H1 (cell line): ENCODE measurements at regions of chr2 and their contacts with region 1.

Region 1: DNA sequence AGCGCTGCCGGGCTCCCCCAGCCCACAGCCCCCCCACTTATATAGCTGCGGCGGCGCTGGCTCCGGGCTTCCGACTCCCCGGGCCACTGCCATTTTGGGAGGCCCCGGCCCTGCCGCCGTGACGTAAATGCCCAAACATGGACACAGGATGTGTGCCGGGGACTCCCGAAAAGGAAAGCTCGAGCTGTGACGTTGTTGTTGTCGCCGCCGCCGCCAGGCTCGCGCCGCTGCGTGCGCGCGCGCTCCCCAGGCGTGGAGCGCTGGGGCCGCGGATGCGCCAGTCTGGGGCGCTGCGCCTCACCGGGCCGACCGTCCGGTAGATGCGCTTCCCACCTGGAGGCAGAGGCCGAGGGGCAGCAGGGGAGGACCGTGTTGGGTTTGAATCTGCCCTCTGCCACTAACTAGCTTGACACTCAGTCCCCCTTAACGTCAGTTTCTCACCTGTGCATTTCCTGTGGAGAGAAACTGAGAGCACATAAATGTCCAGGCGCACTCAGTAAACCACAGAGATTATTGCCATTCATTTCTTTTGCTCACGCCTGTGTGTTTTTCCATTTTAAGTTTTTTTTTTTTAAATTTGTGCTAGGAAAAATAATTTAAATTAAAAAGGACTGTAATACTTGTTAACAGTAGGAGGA is at the start of gene EGR4:
- DNase-seq: peak; percentile 59 to 89
- H3K4me3 ChIP-seq: peak within 1 kb of the TSS; percentile 44 to 68 (median 52)
- H3K27ac ChIP-seq: no peak within 1 kb of the TSS
- H3K4me1 ChIP-seq: peaks cover 0 to 11% (median 3%) of the 10 kb centered on the region in 4 experiments; a peak in 4 of 7 replicates
- H3K27me3 ChIP-seq: peaks cover 28 to 64% (median 57%) of the 10 kb centered on the region in 4 experiments
- CTCF ChIP-seq: peak in 1 of 3 experiments; percentile 20; a peak in 1 of 4 replicates
- EP300 ChIP-seq: no peak
- POLR2A ChIP-seq: peak in 1 of 2 experiments; percentile 54; a peak in 1 of 3 replicates
- RAD21 ChIP-seq: no peak; a peak in 1 of 4 replicates
- total RNA-seq, gene EGR4: 0.20 TPM in 1 of 2 replicates, not detected in the other

Region 2: DNA sequence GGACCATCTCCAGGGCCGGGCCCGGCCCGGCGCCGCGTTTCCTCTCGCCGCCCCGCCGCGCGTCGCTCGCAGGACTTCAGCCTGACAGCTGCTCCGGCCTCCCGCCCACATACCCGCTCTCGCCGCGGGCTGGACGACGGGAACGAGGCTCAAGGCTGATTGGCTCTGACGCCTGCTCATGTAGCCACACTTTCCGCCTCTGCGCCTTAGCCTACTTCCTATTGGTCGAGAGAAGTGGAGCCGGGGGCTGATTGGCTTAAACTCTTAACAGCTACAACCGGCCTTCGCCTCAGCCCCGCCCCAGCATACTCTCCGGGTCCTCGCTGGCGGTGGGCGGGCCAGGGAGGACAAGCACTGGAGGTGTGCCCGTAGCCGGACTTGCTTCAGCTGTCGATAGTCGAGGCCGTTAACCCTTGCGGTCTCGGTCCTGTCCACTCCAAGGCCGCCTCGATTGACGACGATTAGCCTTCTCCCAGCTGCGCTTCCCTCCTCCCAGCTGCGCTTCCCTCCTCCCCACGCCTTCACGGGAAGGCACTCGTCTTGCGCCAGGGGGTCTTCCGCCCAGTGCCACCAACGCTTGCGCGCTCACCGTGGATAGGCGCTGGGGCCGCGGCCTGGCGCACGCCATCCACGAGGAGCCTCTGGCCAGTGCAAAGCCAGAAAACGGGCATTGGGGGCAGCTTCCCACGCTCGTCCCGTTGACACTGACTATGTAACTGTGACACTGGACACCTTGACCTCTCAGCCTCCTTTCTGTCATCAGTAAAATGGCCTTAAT is 60.3 kb before region 1 on chr2 and contains the start of gene PRADC1:
- CTCF ChIA-PET with region 1: interaction called, 14 read pairs
- POLR2A ChIA-PET with region 1: interaction called, 6 read pairs
- DNase-seq: peak; percentile 94 to 98
- H3K4me3 ChIP-seq: peak within 1 kb of the TSS; percentile 82 to 93 (median 88)
- H3K27ac ChIP-seq: peak within 1 kb of the TSS; percentile 30; the same call in 1 of the 2 replicates
- H3K4me1 ChIP-seq: peaks cover 10 to 16% (median 13%) of the 10 kb centered on the region in 4 experiments; a peak in 6 of 7 replicates
- H3K27me3 ChIP-seq: no peaks in the 10 kb centered on the region; a peak in 2 of 7 replicates
- CTCF ChIP-seq: no peak
- EP300 ChIP-seq: no peak
- POLR2A ChIP-seq: no peak
- RAD21 ChIP-seq: no peak
- total RNA-seq, gene PRADC1: 7.5 and 8.9 TPM in 2 replicates

Region 3: GRCh38 chr2:73253901-73254300 is 39.8 kb before region 1 on chr2:
- CTCF ChIA-PET with region 1: interaction called, 40 read pairs
- POLR2A ChIA-PET with region 1: interaction called, 8 read pairs
- DNase-seq: no peak
- H3K4me3 ChIP-seq: no peak overlapping the region
- H3K27ac ChIP-seq: no peak overlapping the region
- H3K4me1 ChIP-seq: peaks cover 0 to 7% (median 1%) of the 10 kb centered on the region in 4 experiments; a peak in 2 of 7 replicates
- H3K27me3 ChIP-seq: no peaks in the 10 kb centered on the region
- CTCF ChIP-seq: no peak
- EP300 ChIP-seq: no peak
- POLR2A ChIP-seq: peak in 1 of 2 experiments; percentile 43; a peak in 2 of 3 replicates
- RAD21 ChIP-seq: no peak

Region 4: DNA sequence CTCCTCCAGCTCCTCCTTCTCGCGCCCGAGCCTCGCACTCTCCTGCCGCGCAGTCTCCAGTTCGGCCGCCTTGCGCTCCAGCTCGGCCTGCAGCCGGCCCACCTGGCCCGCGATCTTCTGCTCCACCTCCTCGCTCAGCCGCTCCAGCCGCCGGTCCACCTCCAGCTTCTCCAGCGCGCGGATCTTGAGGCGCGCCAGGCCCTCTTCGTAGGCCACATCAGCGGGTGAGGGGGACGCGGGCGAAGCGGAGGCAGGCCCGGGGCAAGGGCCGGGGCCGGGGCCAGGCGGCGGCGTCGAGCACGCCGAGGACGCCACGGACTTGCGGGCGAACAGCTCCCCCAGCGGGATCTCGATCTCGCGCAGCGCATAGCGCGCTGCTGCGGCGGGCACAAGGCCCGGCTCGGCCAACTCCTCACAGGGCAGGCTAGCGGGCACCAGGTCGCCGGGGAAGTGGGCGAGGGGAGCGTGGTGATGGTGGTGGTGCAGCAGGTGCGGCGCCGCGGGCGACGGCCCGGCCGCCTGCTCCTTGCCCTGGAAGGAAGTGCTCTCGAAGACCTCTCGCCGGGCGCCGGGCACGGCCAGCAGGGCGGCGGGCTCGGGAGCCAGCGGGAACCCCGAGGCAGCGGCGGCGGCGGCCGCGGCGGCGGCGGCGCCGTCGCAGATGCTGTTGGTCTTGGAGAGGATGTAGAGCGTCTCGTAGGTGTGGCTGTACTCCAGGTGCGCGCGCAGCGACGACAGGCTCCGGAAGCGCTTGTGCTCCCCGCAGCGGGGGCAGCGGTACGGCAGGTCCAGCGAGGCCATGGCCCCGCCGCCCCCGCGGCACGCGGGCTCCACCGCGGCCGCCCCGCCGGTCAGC is 24.6 kb before region 1 on chr2:
- CTCF ChIA-PET with region 1: interaction called, 122 read pairs
- POLR2A ChIA-PET with region 1: interaction called, 6 read pairs
- DNase-seq: peak; percentile 51 to 85
- H3K4me3 ChIP-seq: peak overlapping the region; percentile 39 to 63 (median 54)
- H3K27ac ChIP-seq: peak overlapping the region; percentile 21; the same call in 1 of the 2 replicates
- H3K4me1 ChIP-seq: peaks cover 0 to 10% (median 6%) of the 10 kb centered on the region in 4 experiments; a peak in 5 of 7 replicates
- H3K27me3 ChIP-seq: peaks cover 0 to 28% (median 23%) of the 10 kb centered on the region in 4 experiments; a peak in 6 of 7 replicates
- CTCF ChIP-seq: peak in 2 of 3 experiments; percentile 10 to 12; a peak in 2 of 4 replicates
- EP300 ChIP-seq: peak in 1 of 2 experiments; percentile 84; a peak in 1 of 3 replicates
- POLR2A ChIP-seq: no peak
- RAD21 ChIP-seq: no peak

Region 5: DNA sequence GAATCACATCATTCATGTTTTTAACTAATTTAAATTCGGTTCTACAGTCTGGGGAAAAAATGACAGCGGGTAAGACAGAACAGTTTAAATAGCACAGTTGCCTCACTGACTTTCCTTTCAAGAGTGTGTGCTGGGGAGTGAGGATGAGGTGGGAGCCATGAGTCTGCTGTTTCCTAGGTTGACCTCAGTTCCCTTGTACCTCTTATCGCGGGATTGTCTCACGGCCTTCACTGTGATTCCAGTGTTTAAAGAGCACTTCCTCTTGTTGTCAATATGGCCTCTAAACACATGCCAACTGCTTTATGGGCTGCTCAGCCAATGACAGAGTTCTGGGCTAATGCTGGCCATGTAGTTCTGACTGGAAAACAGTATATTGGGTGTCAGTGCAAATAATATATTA is 50.3 kb after region 1 on chr2:
- CTCF ChIA-PET with region 1: interaction called, 17 read pairs
- POLR2A ChIA-PET with region 1: no interaction called
- DNase-seq: no peak
- H3K4me3 ChIP-seq: no peak overlapping the region
- H3K27ac ChIP-seq: no peak overlapping the region
- H3K4me1 ChIP-seq: no peaks in the 10 kb centered on the region
- H3K27me3 ChIP-seq: no peaks in the 10 kb centered on the region
- CTCF ChIP-seq: no peak
- EP300 ChIP-seq: no peak
- POLR2A ChIP-seq: no peak
- RAD21 ChIP-seq: no peak